ENCODE measurements at regions of chr9 and their contacts with region 1.

Region 1: GRCh38 chr9:93168581-93168980 is 15.4 kb upstream of the WNK2 start:
- DNase-seq: no peak
- H3K4me3 ChIP-seq: no peak overlapping the region
- H3K27ac ChIP-seq: no peak overlapping the region
- H3K4me1 ChIP-seq: peaks cover 0 to 2% (median 0%) of the 10 kb centered on the region in 4 experiments; a peak in 1 of 7 replicates
- H3K27me3 ChIP-seq: no peaks in the 10 kb centered on the region
- CTCF ChIP-seq: no peak
- EP300 ChIP-seq: no peak
- POLR2A ChIP-seq: no peak
- RAD21 ChIP-seq: no peak

Region 2: DNA sequence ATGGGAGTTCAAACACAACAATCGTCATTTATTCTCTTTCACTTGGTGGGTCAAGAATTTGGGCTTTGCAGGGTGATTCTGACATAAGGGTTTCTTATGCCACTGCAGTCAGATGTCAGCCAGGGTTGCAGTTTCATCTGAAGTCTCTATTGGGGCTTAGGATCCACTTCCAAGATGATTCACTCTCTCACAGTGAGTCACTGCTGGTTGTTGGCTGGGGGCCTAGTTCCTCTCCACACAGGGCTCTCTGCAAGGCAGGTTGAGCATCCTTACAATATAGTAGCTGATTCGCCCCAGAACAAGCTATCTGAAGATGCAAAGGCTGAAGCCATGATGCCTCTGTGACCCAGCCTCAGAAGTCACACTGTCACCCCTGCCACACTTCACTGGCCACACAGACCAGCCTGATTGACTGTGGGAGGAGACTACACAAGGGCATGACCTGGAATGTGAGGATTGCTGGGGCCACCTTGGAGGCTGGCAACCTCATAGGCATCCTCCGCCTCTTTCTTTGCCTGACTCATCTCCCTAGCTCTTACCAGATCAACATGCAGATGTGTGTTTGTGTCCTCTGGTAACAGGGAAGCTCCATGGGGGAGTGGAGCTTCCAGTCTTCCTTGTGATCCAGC is 77.0 kb before region 1 on chr9:
- CTCF ChIA-PET with region 1: no interaction called
- POLR2A ChIA-PET with region 1: no interaction called
- DNase-seq: no peak
- H3K4me3 ChIP-seq: no peak overlapping the region
- H3K27ac ChIP-seq: no peak overlapping the region
- H3K4me1 ChIP-seq: peaks cover 0 to 7% (median 4%) of the 10 kb centered on the region in 4 experiments; a peak in 4 of 7 replicates
- H3K27me3 ChIP-seq: no peaks in the 10 kb centered on the region
- CTCF ChIP-seq: no peak
- EP300 ChIP-seq: no peak
- POLR2A ChIP-seq: no peak
- RAD21 ChIP-seq: no peak

Region 3: DNA sequence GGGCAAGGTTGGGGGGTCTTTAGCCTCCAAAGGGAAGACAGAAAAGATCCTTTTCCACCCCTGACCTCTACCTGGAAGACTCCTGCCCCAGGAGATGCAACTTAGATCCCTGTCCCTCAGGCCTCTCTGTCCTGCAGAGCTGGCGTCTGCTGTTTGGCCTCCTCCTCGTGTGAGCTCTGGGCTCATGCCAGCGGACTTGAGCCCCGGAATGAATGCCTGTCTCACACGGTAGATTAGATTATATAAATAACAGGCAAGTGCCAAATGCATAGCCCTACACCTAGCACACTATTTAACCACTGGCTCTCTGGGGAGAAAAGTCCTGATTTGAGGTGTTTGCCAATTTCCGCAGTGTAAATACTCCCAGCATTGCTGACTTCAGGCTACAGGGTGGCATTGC is 14.0 kb after region 1 on chr9:
- CTCF ChIA-PET with region 1: interaction called, 10 read pairs
- POLR2A ChIA-PET with region 1: no interaction called
- DNase-seq: no peak
- H3K4me3 ChIP-seq: no peak overlapping the region
- H3K27ac ChIP-seq: no peak overlapping the region
- H3K4me1 ChIP-seq: peaks cover 0 to 16% (median 7%) of the 10 kb centered on the region in 4 experiments; a peak in 6 of 7 replicates
- H3K27me3 ChIP-seq: peaks cover 0 to 43% (median 27%) of the 10 kb centered on the region in 4 experiments; a peak in 6 of 7 replicates
- CTCF ChIP-seq: no peak
- EP300 ChIP-seq: no peak
- POLR2A ChIP-seq: no peak
- RAD21 ChIP-seq: no peak

Region 4: DNA sequence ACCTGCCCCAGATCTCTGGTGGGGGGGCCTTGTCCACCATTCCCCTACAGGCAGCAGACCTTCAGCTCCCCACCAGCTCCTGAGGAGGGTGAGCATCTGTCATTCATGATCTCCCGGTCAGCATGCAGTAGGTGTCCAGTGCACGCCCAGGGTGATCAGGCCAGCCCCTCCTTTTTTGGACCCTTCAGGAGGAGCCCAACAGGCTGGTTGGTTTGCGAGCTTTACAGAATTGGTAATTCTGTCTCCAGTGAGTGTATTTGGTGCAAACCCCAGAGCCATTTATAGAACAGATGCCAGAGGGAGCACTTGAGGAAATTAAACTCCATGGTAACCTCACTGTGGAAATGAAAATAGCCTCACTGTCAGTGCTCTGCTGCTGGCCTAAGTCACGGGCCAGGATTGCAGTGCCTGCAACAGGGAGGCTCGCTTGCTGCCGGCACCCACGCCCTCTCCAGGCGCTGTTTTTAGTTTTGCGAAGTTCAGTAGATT is 38.8 kb after region 1 on chr9:
- CTCF ChIA-PET with region 1: no interaction called
- POLR2A ChIA-PET with region 1: no interaction called
- DNase-seq: no peak
- H3K4me3 ChIP-seq: no peak overlapping the region
- H3K27ac ChIP-seq: no peak overlapping the region
- H3K4me1 ChIP-seq: peaks cover 0 to 6% (median 2%) of the 10 kb centered on the region in 4 experiments; a peak in 2 of 7 replicates
- H3K27me3 ChIP-seq: no peaks in the 10 kb centered on the region
- CTCF ChIP-seq: no peak
- EP300 ChIP-seq: no peak
- POLR2A ChIP-seq: no peak
- RAD21 ChIP-seq: no peak

Region 5: DNA sequence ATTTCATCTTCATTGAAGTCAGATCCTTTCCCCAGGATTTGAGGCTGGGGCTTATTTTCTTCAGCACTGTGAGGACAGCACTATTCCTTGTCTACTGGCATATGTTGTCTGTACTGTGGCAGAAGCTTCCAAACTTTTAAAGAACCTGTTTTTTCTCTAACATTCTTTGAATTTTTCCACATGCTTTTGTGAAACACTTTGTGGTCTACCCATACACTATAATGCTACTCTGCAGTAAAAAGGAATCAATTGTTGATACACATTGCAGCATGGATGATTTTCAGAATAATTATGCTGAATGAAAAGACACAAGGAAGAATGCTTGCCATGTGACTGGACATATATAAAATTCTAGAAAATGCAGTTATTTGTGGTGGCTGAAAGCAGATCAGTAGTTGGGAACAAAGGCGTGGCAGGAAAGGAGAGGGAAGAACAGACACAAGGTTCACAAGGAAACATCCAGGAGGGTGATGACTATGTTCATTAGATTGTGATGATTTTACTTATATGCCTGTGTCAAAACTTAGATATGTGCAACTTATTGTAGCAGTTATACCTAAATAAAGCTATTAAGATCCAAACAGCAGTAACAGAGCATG is 112.2 kb after region 1 on chr9:
- CTCF ChIA-PET with region 1: no interaction called
- POLR2A ChIA-PET with region 1: no interaction called
- DNase-seq: no peak
- H3K4me3 ChIP-seq: no peak overlapping the region
- H3K27ac ChIP-seq: no peak overlapping the region
- H3K4me1 ChIP-seq: no peaks in the 10 kb centered on the region
- H3K27me3 ChIP-seq: no peaks in the 10 kb centered on the region
- CTCF ChIP-seq: no peak
- EP300 ChIP-seq: no peak
- POLR2A ChIP-seq: no peak
- RAD21 ChIP-seq: no peak

Region 6: GRCh38 chr9:93464395-93464794 is 295.8 kb after region 1 on chr9:
- CTCF ChIA-PET with region 1: no interaction called
- POLR2A ChIA-PET with region 1: no interaction called
- DNase-seq: no peak
- H3K4me3 ChIP-seq: no peak overlapping the region; a peak in 1 of 8 replicates
- H3K27ac ChIP-seq: no peak overlapping the region
- H3K4me1 ChIP-seq: peaks cover 8 to 28% (median 20%) of the 10 kb centered on the region in 4 experiments
- H3K27me3 ChIP-seq: no peaks in the 10 kb centered on the region
- CTCF ChIP-seq: no peak
- EP300 ChIP-seq: no peak
- POLR2A ChIP-seq: no peak
- RAD21 ChIP-seq: no peak

Measured in H1 (cell line).